ENCODE measurements at regions of chr2 and their contacts with region 1.

Region 1: DNA sequence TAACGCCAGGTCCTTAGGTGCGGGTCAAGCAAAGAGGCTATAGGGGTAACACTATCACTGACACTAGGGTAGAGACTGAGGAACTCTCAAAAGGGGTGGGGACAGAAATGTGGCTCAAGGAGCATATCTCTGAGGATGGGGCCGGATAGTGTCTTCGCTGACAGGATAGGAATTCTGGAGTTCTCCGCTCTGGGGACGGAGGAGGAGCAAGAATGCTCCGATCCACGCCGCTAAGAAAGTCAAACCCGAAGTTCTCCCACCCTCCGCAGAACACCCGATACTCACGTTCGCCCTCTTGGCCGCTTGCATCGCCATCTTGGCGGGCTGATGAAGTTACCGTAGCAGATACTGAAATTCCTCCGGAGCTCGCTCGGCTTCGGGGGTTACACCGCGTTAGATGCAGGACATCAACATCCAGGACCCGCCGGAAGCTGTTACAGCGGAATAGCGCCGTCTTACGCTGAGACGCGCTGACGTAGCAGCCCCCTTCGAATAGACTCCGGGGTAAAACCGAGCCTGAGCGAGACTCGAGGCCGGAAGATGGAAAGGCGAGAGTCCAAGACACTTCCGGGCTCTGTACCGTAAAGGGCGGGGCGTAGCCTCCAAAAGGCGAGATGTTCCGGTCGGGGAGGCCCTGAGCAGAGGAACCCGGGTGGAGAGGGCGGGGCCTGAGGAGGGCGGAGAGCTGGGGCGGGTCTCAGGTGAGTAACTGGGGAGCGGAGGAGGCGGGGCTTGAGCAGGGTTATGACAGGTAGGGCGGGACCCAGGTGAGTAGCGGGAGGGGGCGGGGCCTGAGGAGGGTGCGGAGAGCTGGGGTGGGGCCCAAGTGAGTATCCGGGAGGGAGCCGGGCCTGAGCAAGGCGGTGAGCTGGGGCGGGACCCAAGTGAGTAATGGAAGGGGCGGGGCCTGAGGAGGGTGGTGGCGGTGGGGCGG is at the start of gene SF3B6:
- H3K4me3 ChIP-seq: peak within 1 kb of the TSS; percentile 95
- H3K27ac ChIP-seq: peak within 1 kb of the TSS; percentile 88
- H3K4me1 ChIP-seq: peaks cover 7% of the 10 kb centered on the region; the same call in 1 of the 2 replicates
- CTCF ChIP-seq: 0 out of 2 replicates have a peak, but pooled peaks have one; percentile 32

Region 2: DNA sequence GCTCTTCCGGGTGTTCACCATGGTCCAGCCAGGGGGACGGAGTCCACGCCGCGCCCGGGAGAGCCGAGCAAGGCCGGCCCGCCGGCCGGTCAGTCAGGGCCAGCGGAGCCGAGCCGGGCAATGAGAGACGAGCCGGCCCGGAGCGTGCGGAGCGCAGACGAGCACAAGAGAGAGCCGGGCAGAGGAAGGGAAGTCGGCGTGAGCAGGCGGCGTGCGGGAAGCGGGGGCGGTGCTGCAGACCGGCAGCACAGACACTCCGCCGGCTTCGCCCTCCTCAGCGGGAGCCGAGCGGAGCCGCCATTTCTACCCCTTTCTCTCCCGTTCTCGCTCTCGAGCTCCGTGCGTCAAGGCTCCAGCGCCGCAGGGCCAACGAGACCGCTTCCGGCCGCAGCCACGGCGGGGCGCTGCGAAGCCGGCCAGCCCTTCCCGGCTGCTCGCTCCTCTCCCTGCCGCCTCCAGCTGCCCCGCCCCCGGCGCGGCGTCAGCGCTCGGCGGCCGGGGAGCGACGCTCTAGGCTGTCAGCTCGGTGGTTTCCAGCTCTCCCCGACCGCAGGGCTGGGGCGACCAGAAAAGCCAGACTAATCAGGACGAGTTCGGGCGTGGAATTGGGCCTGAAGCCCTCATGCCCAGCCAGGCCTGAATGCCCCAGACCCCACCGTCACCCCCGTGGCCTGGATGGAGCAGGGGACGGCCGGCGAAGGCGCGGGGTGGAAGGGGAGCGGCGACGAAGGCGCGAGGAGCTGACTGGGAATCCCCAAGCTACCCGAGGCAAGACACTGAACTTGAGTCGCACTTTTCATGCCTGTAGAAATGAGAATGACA is 149.2 kb before region 1 on chr2 and contains the start of gene ATAD2B:
- CTCF ChIA-PET with region 1: interaction called, 5 read pairs
- POLR2A ChIA-PET with region 1: interaction called, 31 read pairs
- H3K4me3 ChIP-seq: peak within 1 kb of the TSS; percentile 98
- H3K27ac ChIP-seq: peak within 1 kb of the TSS; percentile 86
- H3K4me1 ChIP-seq: peaks cover 9% of the 10 kb centered on the region
- CTCF ChIP-seq: peak; percentile 89

Region 3: GRCh38 chr2:23976883-23977282 is 99.3 kb before region 1 on chr2:
- CTCF ChIA-PET with region 1: no interaction called
- POLR2A ChIA-PET with region 1: no interaction called
- H3K4me3 ChIP-seq: no peak overlapping the region
- H3K27ac ChIP-seq: no peak overlapping the region
- H3K4me1 ChIP-seq: no peaks in the 10 kb centered on the region
- CTCF ChIP-seq: no peak

Region 4: GRCh38 chr2:24046930-24047702 is 29.1 kb before region 1 on chr2 and contains the start of gene WDCP:
- CTCF ChIA-PET with region 1: interaction called, 4 read pairs
- POLR2A ChIA-PET with region 1: interaction called, 41 read pairs
- H3K4me3 ChIP-seq: peak within 1 kb of the TSS; percentile 91
- H3K27ac ChIP-seq: peak within 1 kb of the TSS; percentile 66
- H3K4me1 ChIP-seq: peaks cover 9% of the 10 kb centered on the region; the same call in 1 of the 2 replicates
- CTCF ChIP-seq: peak; percentile 14; the same call in 1 of the 2 replicates

Region 5: DNA sequence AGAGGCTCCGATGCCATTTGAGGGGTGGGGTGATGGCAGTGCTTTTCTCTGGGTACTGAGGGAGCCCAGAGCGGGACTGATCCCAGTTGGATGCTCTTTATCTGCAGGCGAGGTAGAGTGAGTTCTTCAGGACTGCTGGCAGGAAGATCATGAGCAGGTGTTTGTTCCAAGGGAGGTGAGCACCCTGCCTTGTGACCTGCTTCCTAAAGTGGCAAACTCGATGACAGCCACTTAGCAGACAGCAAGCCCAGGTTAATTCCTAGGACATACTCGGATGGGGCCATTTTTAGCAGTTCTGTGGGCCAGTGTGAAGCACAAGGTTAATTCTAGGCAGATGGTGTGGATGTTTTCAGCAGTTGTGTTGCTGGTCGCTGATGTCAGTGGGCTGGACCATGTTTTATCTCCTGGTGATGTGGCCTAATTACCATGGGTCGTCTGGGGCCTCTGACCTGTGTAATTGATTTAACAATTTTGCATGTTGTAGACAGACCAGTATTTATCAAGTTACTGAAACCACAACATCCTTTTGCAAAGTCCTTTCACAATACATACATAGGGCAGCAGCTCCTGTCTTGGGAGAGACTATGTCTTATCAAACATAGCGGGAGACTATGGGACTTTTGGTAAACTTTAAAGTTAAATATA is 21.7 kb before region 1 on chr2:
- CTCF ChIA-PET with region 1: interaction called, 4 read pairs
- POLR2A ChIA-PET with region 1: interaction called, 14 read pairs
- H3K4me3 ChIP-seq: no peak overlapping the region
- H3K27ac ChIP-seq: no peak overlapping the region
- H3K4me1 ChIP-seq: 0 out of 2 replicates have a peak, but pooled peaks cover 3% of the 10 kb centered on the region
- CTCF ChIP-seq: no peak

Region 6: GRCh38 chr2:24123195-24123921 is 47.2 kb after region 1 on chr2 and contains the starts of genes FAM228B and PFN4:
- CTCF ChIA-PET with region 1: no interaction called
- POLR2A ChIA-PET with region 1: interaction called, 11 read pairs
- H3K4me3 ChIP-seq: peak within 1 kb of the TSS; percentile 72
- H3K27ac ChIP-seq: peak within 1 kb of the TSS; percentile 79
- H3K4me1 ChIP-seq: peaks cover 3% of the 10 kb centered on the region
- CTCF ChIP-seq: peak; percentile 32

Region 7: DNA sequence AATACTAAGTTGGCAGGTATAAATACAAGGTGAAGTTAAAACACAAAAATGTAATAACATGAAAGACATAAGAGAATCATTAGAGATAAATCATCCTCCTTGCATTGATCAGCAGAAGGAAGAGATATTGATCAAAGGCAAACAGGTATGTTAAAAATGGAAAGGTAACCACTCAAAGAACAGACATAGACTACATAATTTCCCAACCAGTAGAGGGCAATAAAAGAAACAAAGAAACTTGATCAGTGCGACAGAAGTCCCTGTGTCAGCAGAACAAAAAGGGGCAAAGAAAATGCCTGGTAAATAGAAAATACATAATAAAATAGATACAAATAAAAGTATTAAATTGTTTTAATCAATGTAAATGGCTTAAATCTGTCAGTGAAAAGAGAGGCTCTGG is 152.3 kb after region 1 on chr2:
- CTCF ChIA-PET with region 1: no interaction called
- POLR2A ChIA-PET with region 1: no interaction called
- H3K4me3 ChIP-seq: no peak overlapping the region
- H3K27ac ChIP-seq: no peak overlapping the region
- H3K4me1 ChIP-seq: no peaks in the 10 kb centered on the region
- CTCF ChIP-seq: peak; percentile 32; the same call in 1 of the 2 replicates

Measured in HEK293 (cell line).